ENCODE measurements at regions of chr3 and their contacts with region 1.

Region 1: GRCh38 chr3:137970914-137971831 is 38.8 kb upstream of the CLDN18 start:
- DNase-seq: peak; percentile 59 to 73
- ATAC-seq: peak; percentile 63 to 92 (median 81)
- H3K4me3 ChIP-seq: no peak overlapping the region
- H3K27ac ChIP-seq: no peak overlapping the region
- H3K4me1 ChIP-seq: no peaks in the 10 kb centered on the region
- H3K27me3 ChIP-seq: peaks cover 0 to 14% (median 0%) of the 10 kb centered on the region in 7 donors
- CTCF ChIP-seq: peak; percentile 64 to 89 (median 82)

Region 2: DNA sequence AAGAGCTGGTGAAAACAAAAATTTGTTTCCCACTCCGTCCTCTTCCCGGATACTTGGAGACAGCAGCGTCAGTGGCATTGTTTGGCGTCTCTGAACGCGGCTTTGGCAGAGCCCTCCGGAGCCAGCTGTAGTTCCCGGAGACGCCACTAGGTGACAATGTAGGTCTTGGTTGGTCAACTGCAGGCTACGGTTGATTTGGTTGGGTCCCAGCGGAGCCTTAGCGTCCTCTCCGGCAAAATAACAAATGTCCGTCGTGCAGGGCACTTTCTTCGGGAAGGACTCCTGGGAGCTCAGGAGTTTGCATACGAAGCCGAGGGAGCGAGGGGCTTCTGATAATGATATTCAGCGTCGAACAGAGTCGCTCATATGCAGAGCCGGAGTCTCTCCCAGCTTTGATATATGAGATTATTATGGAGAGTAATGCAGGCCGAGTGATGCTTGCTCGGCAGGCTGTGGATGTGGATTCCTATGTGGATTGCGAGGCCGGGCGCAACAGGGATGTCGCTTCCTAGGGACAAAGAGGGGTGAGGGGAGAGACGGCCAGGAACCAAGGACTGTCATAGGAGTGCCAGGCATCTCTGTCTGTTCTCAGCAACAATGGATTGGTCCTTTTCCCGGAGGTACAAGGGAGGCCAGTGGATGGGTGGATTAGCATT is 938.6 kb before region 1 on chr3:
- intact Hi-C with region 1: loop called in 1 of 10 experiments (anchors 5 kb)
- DNase-seq: peak; percentile 86 to 90
- ATAC-seq: peak; percentile 86 to 94 (median 89)
- H3K4me3 ChIP-seq: peak overlapping the region in 8 of 10 donors; percentile 18 to 50 (median 44)
- H3K27ac ChIP-seq: no peak overlapping the region
- H3K4me1 ChIP-seq: peaks cover 0 to 10% (median 6%) of the 10 kb centered on the region in 9 donors
- H3K27me3 ChIP-seq: peaks cover 0 to 27% (median 7%) of the 10 kb centered on the region in 7 donors
- CTCF ChIP-seq: peak; percentile 90 to 99 (median 98)

Region 3: GRCh38 chr3:138051946-138052802 is 81.0 kb after region 1 on chr3:
- intact Hi-C with region 1: loop called in 1 of 10 experiments (anchors 5 kb)
- DNase-seq: peak; percentile 24 to 48
- ATAC-seq: peak in 7 of 8 donors; percentile 70 to 76 (median 73)
- H3K4me3 ChIP-seq: no peak overlapping the region
- H3K27ac ChIP-seq: no peak overlapping the region
- H3K4me1 ChIP-seq: peaks cover 0 to 26% (median 0%) of the 10 kb centered on the region in 9 donors
- H3K27me3 ChIP-seq: no peaks in the 10 kb centered on the region
- CTCF ChIP-seq: peak; percentile 32 to 69 (median 60)

Measured in heart right ventricle (tissue), 16 donors.